ENCODE measurements at regions of chr20 and their contacts with region 1.

Region 1: GRCh38 chr20:63537525-63538203 is 488 bp upstream of the PTK6 start:
- DNase-seq: peak; percentile 87 to 96 (median 95)
- H3K4me3 ChIP-seq: peak overlapping the region in 5 of 7 experiments; percentile 36 to 75 (median 61)
- H3K27ac ChIP-seq: no peak overlapping the region
- H3K4me1 ChIP-seq: peaks cover 0 to 26% (median 19%) of the 10 kb centered on the region in 4 experiments
- H3K27me3 ChIP-seq: no peaks in the 10 kb centered on the region

Region 2: GRCh38 chr20:63520504-63520933 is 17.1 kb before region 1 on chr20 and contains the start of gene PPDPF:
- CTCF ChIA-PET with region 1: interaction called, 31 read pairs
- POLR2A ChIA-PET with region 1: no interaction called
- DNase-seq: peak; percentile 74 to 88 (median 88)
- H3K4me3 ChIP-seq: peak within 1 kb of the TSS; percentile 52 to 83 (median 76)
- H3K27ac ChIP-seq: peak within 1 kb of the TSS in 1 of 2 experiments; percentile 64
- H3K4me1 ChIP-seq: peaks cover 0 to 28% (median 21%) of the 10 kb centered on the region in 4 experiments
- H3K27me3 ChIP-seq: no peaks in the 10 kb centered on the region

Region 3: DNA sequence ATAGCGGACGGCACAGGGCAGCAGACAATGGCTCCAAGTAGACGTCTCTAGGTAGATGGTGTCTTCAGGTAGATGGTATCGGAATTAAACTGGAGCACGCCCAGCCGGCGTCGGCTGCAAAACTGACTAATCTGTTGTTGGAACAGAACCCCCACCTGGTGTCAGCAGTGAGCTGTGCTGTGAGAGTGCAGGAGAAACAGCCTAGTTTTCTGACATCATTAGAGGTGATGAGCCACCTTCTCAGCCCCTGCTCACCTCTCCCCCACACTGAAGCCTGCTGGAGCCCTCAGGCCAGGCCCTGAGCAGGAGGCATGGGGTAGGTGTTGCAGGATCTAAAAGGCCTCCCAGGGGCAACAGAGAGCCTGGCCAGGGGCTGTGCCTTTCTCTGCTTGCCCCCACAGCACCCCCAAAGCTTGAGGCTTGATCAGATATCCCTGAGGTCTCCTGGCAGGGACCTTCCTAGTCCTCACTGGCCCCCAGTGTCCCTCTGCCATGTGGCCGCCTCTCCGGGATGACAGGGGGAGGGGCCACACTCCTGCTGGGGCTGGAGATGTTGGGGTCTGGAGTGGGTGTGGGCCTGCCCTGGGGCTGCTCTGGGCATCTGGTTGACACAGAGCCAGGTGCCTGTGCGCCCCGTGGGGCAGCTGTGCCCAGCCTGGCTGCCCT is 43.3 kb after region 1 on chr20:
- CTCF ChIA-PET with region 1: interaction called, 13 read pairs
- POLR2A ChIA-PET with region 1: no interaction called
- DNase-seq: peak; percentile 70 to 87 (median 82)
- H3K4me3 ChIP-seq: no peak overlapping the region
- H3K27ac ChIP-seq: no peak overlapping the region
- H3K4me1 ChIP-seq: no peaks in the 10 kb centered on the region
- H3K27me3 ChIP-seq: peaks cover 0 to 4% (median 0%) of the 10 kb centered on the region in 5 experiments

Region 4: DNA sequence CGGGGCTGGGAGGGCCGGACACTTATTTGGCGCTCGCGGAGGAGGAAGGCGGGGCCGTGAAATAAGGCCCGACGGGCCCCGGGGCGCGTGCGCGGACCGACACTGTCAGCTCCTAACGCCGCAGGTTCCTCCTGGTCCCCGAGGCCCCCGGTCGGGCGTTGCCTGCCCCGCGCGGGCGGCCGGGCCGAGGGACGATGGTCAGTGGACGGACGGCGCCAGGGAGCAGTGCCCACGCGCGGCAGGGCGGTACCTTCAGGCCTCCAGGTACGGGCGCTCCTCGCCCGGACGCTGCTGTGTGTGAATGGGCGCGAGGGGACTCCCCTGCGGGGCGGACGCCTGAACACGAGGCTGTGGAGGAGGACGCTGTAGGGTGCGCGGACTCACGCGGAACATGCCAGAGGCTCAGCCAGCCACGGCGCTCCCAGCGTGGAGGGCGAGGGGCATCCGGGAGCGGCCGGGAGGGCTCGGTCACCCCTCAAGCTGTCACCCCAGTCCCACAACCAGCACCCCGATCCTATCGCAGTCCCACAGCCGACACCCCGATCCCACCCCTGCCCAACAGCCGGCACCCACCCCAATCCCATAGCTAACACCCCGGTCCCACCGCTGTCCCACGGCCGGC is 89.6 kb after region 1 on chr20:
- CTCF ChIA-PET with region 1: no interaction called
- POLR2A ChIA-PET with region 1: no interaction called
- DNase-seq: peak; percentile 94 to 97 (median 97)
- H3K4me3 ChIP-seq: peak overlapping the region; percentile 64 to 96 (median 79)
- H3K27ac ChIP-seq: peak overlapping the region; percentile 64 to 85
- H3K4me1 ChIP-seq: peaks cover 2 to 22% (median 21%) of the 10 kb centered on the region in 4 experiments
- H3K27me3 ChIP-seq: no peaks in the 10 kb centered on the region